MCF 10A (cell line): ENCODE measurements at regions of chr9 and their contacts with region 1.

Region 1: GRCh38 chr9:135410831-135411473 is 68.6 kb upstream of the PPP1R26 start:
- DNase-seq: no peak
- H3K4me3 Mint-ChIP-seq: no peak overlapping the region
- H3K27ac Mint-ChIP-seq: no peak overlapping the region
- H3K4me1 Mint-ChIP-seq: no peaks in the 10 kb centered on the region
- H3K27me3 Mint-ChIP-seq: peaks cover 14% of the 10 kb centered on the region
- CTCF ChIP-seq: no peak

Region 2: GRCh38 chr9:134698587-134699342 is 712.2 kb before region 1 on chr9:
- CTCF ChIA-PET with region 1: interaction called, 8 read pairs
- POLR2A ChIA-PET with region 1: no interaction called
- intact Hi-C with region 1: loop called (anchors 5 kb)
- DNase-seq: peak; percentile 57
- H3K4me3 Mint-ChIP-seq: no peak overlapping the region
- H3K27ac Mint-ChIP-seq: no peak overlapping the region
- H3K4me1 Mint-ChIP-seq: peaks cover 10% of the 10 kb centered on the region
- H3K27me3 Mint-ChIP-seq: peaks cover 5% of the 10 kb centered on the region
- CTCF ChIP-seq: peak; percentile 97

Region 3: GRCh38 chr9:134778841-134779411 is 632.0 kb before region 1 on chr9:
- CTCF ChIA-PET with region 1: interaction called, 6 read pairs
- POLR2A ChIA-PET with region 1: no interaction called
- intact Hi-C with region 1: loop called (anchors 1 kb)
- DNase-seq: peak; percentile 69
- H3K4me3 Mint-ChIP-seq: peak overlapping the region; percentile 12
- H3K27ac Mint-ChIP-seq: peak overlapping the region; percentile 57
- H3K4me1 Mint-ChIP-seq: peaks cover 23% of the 10 kb centered on the region
- H3K27me3 Mint-ChIP-seq: peaks cover 45% of the 10 kb centered on the region
- CTCF ChIP-seq: peak; percentile 65

Region 4: GRCh38 chr9:134951461-134951860 is 459.5 kb before region 1 on chr9:
- CTCF ChIA-PET with region 1: no interaction called
- POLR2A ChIA-PET with region 1: no interaction called
- intact Hi-C with region 1: no loop called
- DNase-seq: no peak
- H3K4me3 Mint-ChIP-seq: no peak overlapping the region
- H3K27ac Mint-ChIP-seq: no peak overlapping the region
- H3K4me1 Mint-ChIP-seq: no peaks in the 10 kb centered on the region
- H3K27me3 Mint-ChIP-seq: no peaks in the 10 kb centered on the region
- CTCF ChIP-seq: no peak

Region 5: GRCh38 chr9:135077497-135078200 is 333.3 kb before region 1 on chr9:
- CTCF ChIA-PET with region 1: interaction called, 10 read pairs
- POLR2A ChIA-PET with region 1: interaction called, 3 read pairs
- intact Hi-C with region 1: no loop called
- DNase-seq: peak; percentile 13
- H3K4me3 Mint-ChIP-seq: no peak overlapping the region
- H3K27ac Mint-ChIP-seq: no peak overlapping the region
- H3K4me1 Mint-ChIP-seq: no peaks in the 10 kb centered on the region
- H3K27me3 Mint-ChIP-seq: peaks cover 25% of the 10 kb centered on the region
- CTCF ChIP-seq: no peak

Region 6: DNA sequence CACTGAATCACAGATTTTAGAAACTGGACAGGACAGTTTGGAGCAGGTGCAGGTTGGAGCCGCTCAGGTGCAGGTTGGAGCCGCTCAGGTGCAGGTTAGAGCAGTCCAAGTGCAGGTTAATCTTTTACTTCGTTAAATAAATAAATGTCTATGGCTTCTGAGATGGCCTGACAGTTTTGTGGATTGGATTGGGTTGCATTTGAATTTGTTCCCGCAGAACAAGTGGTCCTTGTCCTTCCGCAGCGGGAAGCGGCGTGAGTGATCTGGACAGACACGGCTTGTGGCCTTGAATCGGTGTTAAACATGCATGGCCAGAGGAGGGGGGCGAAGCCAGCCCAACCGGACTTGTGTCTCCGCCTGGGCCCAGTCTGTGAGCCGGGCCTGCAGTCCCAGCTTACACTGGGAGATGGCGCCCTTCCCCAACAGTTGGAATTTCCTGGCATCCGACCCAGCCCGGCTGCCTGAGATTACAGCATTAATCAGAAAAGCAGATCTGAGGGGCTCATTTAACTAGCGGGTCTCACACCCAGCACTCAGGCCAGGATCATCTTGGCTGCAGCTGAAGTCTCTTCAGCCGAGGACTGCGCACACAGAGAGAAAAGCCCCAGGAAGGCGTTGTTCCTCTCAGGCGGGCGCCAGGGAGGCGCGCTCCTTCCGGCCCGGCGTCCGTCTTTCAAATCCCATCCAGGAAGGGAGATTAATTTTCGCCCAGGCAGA is 325.0 kb before region 1 on chr9:
- CTCF ChIA-PET with region 1: interaction called, 31 read pairs
- POLR2A ChIA-PET with region 1: interaction called, 3 read pairs
- intact Hi-C with region 1: no loop called
- DNase-seq: peak; percentile 53
- H3K4me3 Mint-ChIP-seq: no peak overlapping the region
- H3K27ac Mint-ChIP-seq: no peak overlapping the region
- H3K4me1 Mint-ChIP-seq: no peaks in the 10 kb centered on the region
- H3K27me3 Mint-ChIP-seq: peaks cover 23% of the 10 kb centered on the region
- CTCF ChIP-seq: peak; percentile 76

Region 7: DNA sequence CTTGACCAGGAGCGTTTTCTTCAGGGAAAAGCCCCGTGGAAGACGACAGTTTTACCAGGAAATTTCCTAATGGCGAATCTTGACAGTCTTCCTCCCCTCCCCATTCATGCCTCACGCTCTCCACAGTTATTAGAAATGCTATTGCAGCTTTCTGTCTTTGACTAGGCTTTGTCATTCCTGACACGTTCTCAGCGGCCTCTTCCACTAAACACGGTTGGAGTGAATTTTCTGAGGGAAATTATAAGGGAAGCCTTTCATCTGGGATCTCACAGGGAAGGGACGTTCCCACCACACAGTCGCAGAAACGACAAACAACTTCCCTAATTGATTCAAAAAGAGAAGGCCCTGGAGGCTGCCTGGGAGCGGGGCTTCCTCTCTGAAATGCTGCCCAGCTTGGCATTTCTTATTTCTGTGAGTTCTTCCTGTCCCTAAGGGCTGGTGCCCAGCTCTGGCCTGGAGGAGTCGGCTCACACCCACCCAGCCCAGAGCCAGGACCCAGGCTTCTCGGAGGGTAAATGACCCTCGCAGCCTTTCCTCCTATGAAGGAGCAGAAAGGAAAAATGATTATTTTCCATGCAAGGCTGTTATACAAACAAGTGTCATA is 11.5 kb after region 1 on chr9:
- CTCF ChIA-PET with region 1: interaction called, 14 read pairs
- POLR2A ChIA-PET with region 1: no interaction called
- intact Hi-C with region 1: no loop called
- DNase-seq: no peak
- H3K4me3 Mint-ChIP-seq: no peak overlapping the region
- H3K27ac Mint-ChIP-seq: no peak overlapping the region
- H3K4me1 Mint-ChIP-seq: no peaks in the 10 kb centered on the region
- H3K27me3 Mint-ChIP-seq: peaks cover 53% of the 10 kb centered on the region
- CTCF ChIP-seq: no peak